ENCODE measurements at regions of chr3 and their contacts with region 1.

Region 1: DNA sequence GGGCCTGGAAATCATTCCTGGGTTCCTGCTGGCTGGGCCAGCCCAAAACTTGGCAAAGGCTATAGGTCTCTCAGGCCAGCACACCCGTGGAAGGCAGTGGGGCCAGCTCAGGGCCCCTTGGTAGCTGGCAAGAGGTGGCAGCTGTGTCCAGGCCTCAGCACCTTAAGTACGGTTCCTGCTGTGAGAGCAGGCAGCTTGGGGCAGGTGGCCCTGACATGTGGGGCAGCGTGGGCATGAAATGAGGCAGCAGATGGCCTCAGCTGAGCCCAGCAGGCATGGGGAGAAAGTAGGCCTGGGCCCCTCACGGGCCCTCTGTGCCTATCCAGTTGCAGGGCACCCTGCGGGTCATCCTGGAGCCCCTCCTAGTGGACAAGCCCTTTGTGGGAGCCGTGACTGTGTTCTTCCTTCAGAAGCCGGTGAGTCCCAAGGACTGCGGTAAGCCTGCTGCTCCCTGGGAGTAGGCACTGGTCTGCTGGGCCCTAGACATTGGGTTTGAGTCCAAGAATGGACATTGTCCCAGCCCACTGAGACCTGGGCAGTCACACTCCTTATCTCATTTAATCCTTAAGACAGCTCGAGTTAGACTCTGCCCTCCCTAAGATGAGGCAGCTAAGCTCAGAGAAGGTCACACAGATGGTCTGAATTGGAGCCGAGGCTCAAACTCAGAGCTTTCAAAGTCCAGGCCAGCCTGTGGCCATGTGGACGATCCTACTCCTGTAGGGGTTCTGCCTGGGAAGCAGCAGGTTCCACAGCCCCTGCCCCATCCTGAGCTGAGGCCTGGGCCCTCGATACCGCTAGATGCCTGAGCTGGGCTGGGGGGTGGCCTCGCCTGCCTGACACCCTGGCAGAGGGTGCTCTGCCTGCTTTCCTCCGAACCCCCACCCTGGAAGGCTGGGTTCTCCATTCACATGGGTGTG is 25.5 kb downstream of the ESYT3 start:
- DNase-seq: no peak
- ATAC-seq: no peak
- H3K4me3 ChIP-seq: no peak overlapping the region
- H3K27ac ChIP-seq: no peak overlapping the region
- H3K4me1 ChIP-seq: no peaks in the 10 kb centered on the region
- H3K27me3 ChIP-seq: no peaks in the 10 kb centered on the region
- CTCF ChIP-seq: no peak

Region 2: DNA sequence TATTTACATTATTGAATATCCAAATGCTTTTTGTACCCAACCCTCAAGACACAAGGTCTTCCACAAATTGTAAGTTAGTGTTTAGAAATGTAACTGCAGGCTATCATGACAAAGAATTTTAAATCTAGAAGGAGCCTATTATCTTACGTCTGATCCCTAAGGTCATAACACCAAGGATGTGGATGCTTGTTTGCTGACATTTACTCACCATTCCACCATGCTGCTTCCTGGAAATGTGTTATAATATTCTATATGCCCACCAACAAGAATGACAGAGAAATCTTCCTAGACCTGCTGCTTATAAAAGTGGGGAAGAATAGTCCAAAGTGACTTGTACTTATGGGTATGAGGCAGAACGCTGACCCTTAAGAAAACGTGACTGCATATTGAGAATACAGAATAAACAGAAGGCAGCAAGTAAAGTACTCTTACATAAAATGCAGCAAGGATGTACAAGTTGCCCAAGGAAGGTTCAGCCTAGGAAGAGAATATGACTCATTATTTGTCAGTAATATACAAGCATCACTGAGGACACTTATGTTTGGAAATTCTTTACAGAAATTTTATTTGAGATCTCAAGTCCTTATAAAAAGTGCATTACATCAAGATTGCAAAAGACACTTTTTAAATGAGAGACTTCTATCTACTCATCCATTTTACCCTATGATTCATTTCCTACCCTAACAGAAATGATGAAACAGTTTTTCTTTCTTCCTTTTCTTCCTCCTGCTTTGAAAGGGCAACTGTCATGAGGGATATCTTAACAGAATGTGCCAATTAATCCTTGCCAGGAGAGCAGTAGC is 34.1 kb after region 1 on chr3:
- CTCF ChIA-PET with region 1: no interaction called
- POLR2A ChIA-PET with region 1: no interaction called
- intact Hi-C with region 1: loop called (anchors 2 kb)
- DNase-seq: peak; percentile 75
- ATAC-seq: peak; percentile 92
- H3K4me3 ChIP-seq: no peak overlapping the region
- H3K27ac ChIP-seq: peak overlapping the region; percentile 82
- H3K4me1 ChIP-seq: peaks cover 27% of the 10 kb centered on the region
- H3K27me3 ChIP-seq: no peaks in the 10 kb centered on the region
- CTCF ChIP-seq: no peak